A673 (cell line): ENCODE measurements at regions of chr19 and their contacts with region 1.

Region 1: DNA sequence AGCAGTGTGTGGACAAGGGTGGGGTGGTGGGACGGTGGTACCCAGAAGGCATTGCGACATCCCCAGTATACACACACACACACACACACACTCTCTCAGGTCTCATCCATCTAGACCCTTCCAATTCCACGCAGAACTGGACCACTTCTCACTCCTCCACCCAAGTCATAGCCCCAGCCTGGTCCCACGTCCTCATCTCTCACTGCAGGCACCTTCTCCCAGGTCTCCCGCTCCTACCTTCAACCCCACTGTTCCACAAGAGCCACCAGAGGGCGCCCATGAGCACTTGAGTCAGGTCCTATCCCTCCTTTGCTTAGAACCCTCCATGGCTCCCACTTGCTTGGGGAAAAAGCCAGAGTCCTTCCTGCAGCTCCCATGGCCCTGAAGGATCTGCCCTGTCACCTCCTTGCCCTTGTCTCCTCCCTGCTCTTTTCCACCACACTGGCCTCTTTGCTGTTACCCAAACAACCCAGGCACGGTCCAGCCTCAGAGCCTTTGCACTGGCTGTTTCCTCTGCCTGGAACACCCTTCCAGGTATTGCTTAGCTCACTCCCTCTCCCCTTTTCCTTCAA is 62.6 kb downstream of the IER2 start:
- DNase-seq: peak; percentile 72
- H3K4me3 ChIP-seq: no peak overlapping the region
- H3K27ac ChIP-seq: no peak overlapping the region
- H3K4me1 ChIP-seq: peaks cover 3% of the 10 kb centered on the region
- H3K27me3 ChIP-seq: no peaks in the 10 kb centered on the region
- CTCF ChIP-seq: peak; percentile 75

Region 2: DNA sequence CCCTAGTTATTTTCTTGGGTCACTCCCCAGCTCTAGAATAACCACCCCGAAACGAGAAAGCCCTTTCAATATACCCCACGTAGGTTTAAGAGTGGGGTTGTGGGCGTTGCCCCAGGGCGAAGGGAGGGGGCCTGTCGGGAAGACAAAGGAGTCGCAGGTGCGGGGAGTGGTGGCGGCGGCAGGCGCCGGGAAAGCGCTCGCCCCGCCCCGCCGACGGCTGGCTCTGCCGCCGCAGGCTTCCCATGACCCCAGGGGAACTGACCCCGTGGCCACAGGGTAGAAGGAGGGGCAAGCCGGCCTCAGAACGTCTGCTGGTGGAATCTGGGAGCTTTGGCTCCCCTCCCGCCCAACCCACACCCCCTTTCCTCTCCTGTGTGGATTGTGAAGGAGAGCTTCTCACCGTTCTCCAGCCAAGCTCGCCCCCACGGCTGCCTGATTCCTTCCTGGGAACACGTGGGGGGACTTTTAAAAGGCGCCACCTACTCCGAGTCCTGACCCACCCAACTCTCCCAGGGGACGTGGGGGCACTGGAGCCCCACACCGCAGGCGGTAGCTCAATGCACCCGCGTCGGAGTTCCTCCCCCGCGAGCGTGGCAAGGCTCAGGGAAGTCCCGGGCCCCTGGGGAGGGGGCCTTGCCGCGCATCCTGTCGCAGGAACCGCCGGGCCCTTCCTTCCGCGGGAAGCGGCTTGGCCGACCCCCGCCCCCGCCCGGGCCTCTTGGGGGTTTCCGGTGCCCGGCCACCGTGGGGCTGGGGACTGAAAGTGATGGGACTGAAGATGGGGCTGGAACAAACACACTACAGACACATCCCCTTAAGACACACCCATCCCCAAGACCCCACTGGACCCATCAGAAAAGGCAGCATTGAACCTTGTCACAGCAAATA is 57.1 kb before region 1 on chr19:
- CTCF ChIA-PET with region 1: no interaction called
- POLR2A ChIA-PET with region 1: interaction called, 11 read pairs
- intact Hi-C with region 1: no loop called
- DNase-seq: peak; percentile 81
- H3K4me3 ChIP-seq: peak overlapping the region; percentile 79
- H3K27ac ChIP-seq: peak overlapping the region; percentile 100
- H3K4me1 ChIP-seq: peaks cover 19% of the 10 kb centered on the region
- H3K27me3 ChIP-seq: no peaks in the 10 kb centered on the region
- CTCF ChIP-seq: no peak

Region 3: DNA sequence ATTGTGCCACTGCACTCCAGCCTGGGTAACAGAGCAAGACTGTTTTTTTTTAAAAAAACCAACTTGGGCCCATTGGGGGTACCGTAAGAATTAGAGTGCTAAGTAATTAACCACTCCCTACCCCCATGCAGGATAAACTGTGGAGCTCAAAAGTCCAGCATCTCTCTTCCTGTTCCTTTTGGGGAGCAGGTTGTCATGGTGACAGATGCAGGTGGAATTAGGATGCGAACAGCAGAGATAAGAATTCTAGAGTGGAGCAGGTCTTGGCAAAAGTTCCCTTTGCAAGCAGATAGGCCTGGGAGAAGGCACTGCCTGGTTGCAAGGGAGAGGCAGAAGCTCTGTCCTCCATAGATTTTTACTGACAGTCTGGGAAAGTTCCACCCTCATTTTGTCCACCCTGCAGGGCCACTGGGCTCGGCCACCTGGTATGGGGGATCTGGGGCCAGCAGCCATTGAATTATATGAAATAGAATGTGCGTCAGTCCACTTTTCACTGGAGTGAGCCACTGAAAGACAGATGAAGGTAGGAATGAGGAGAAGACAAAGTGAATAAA is 79.0 kb after region 1 on chr19:
- CTCF ChIA-PET with region 1: no interaction called
- POLR2A ChIA-PET with region 1: no interaction called
- intact Hi-C with region 1: no loop called
- DNase-seq: no peak
- H3K4me3 ChIP-seq: no peak overlapping the region
- H3K27ac ChIP-seq: no peak overlapping the region
- H3K4me1 ChIP-seq: no peaks in the 10 kb centered on the region
- H3K27me3 ChIP-seq: no peaks in the 10 kb centered on the region
- CTCF ChIP-seq: no peak

Region 4: GRCh38 chr19:13526552-13526951 is 313.7 kb after region 1 on chr19:
- CTCF ChIA-PET with region 1: no interaction called
- POLR2A ChIA-PET with region 1: no interaction called
- intact Hi-C with region 1: no loop called
- DNase-seq: peak; percentile 47
- H3K4me3 ChIP-seq: no peak overlapping the region
- H3K27ac ChIP-seq: no peak overlapping the region
- H3K4me1 ChIP-seq: no peaks in the 10 kb centered on the region
- H3K27me3 ChIP-seq: no peaks in the 10 kb centered on the region
- CTCF ChIP-seq: peak; percentile 58